Astrocyte of the cerebellum (primary cell): ENCODE measurements at regions of chr1 and their contacts with region 1.

Region 1: DNA sequence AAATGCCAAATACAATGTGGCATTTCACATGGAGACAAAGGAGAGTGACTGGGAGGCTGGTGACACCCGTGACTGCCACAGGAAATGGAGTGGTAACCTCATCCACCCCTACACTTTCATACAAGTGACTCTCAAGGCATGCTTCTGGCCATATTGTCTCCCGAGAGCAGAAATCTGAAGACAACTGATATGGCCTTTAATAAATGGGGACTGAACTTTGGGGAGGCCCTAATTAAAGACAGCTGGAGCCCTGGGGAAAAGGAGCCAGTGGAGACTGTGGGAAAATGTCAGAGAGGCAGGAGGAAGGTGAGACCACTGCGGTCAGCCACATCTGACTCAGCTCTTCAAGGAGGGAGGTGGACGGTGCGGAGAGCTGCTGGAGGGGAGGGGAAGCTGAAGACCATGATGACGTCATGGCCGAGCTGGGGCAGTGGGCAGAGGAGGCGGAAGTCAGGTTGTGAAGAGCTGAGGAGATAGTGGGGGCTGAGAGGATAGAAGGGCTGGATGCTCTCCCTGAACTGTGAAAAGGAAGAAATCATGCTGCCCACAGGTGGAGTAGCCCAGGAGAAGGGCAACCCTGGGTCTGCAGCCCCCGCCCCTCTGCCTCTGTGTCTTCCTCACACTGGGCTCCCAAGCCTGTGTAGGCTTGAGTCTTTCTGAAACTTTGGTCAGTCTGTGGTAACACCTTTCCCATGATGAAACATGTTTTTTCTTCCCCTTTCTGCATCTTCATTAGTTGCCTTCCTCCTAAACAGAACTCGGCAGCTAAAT is 14.0 kb upstream of the NCF2 start:
- DNase-seq: peak; percentile 87
- H3K4me3 ChIP-seq: no peak overlapping the region
- CTCF ChIP-seq: no peak

Region 2: DNA sequence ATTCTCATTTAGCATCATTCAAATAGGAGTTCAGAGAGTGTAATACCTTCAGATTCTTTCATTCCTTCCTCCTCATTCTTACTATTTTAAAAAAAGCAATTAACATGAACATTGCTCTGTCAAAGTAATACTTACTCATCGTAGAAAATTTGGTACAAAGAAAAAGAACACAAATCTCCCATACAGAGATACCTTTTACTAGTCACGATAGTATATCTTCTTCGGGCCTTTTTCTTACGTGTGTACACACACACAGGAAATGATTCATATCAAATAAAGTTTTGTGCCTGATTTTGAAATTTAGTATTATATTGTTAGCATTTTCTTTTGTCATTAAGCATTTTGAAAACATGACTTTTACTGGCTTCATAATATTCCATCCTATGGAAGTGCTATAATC is 66.8 kb before region 1 on chr1:
- in situ Hi-C with region 1: loop called (anchors 5 kb)
- DNase-seq: no peak
- H3K4me3 ChIP-seq: no peak overlapping the region
- CTCF ChIP-seq: no peak

Region 3: GRCh38 chr1:183655562-183656075 is 51.4 kb after region 1 on chr1:
- in situ Hi-C with region 1: no loop called
- DNase-seq: peak; percentile 73
- H3K4me3 ChIP-seq: no peak overlapping the region
- CTCF ChIP-seq: peak; percentile 75

Region 4: GRCh38 chr1:183911285-183911684 is 307.1 kb after region 1 on chr1:
- in situ Hi-C with region 1: no loop called
- DNase-seq: no peak
- H3K4me3 ChIP-seq: no peak overlapping the region
- CTCF ChIP-seq: no peak